ENCODE measurements at regions of chr2 and their contacts with region 1.

Region 1: DNA sequence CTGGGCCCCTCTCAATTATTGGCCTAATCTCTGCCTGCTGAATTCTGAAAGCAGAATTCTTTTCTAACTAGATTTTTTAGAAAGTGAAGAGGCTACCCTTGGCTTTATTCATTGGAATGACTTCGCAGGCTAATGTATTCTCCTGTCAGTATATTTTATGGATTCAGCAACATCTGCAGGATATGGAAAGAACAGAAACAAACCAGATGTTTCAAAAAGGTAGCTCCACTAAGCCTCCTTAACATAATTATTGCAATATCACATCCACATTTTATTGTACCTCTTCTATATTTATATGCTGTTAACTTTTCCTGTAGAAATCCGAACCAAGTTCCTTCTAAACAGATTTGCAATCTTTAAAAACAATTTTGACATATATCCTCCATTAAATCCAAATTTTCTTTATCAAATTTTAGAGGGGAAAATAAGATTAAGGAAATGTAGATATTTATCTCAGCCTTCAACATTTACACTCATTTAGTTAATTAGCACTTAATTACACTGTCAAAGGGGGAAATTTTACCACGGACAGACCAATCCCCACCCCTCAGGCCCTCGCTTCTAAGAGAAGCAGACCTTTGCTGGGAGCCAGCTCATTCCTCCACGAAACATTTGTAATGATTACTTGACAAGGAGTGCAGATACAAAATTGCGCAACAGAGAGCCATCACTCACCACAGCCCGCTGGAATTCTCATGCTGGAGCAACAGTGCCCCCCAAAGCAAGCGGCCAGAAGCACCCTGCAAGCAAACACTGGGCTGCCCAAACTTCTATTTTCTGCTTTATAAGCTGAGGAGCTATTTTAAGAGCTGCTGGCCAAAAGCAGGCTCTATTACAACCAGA is 253.4 kb downstream of the ETAA1 start:
- DNase-seq: peak; percentile 74 to 83
- ATAC-seq: peak; percentile 84 to 86
- H3K4me3 ChIP-seq: no peak overlapping the region
- H3K27ac ChIP-seq: peak overlapping the region; percentile 64 to 71 (median 66)
- H3K4me1 ChIP-seq: peaks cover 25 to 26% of the 10 kb centered on the region in 2 donors
- H3K27me3 ChIP-seq: no peaks in the 10 kb centered on the region
- CTCF ChIP-seq: peak; percentile 42 to 74 (median 53)
- POLR2A ChIP-seq: no peak

Region 2: DNA sequence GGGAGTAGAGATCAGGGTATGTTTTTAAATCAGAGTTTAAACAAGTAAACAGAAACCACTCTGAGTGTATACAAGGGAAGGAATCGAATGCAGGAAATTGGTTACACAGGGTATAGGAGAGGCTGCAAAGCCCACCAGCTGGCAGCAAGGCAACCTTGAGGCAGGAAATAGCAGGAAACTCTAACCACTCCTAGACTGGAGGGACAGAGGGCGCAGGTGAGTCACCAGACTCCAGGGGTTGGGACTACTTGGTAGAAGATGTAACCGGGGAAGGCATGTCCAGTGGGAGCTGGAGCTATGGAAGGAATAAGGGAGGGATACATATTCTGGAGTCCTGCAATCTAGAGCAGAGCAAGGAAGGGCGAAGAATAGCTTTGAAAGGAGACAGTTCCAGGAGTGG is 1063.3 kb before region 1 on chr2:
- in situ Hi-C with region 1: no loop called
- intact Hi-C with region 1: loop called (anchors 10 kb)
- DNase-seq: no peak
- ATAC-seq: no peak
- H3K4me3 ChIP-seq: no peak overlapping the region
- H3K27ac ChIP-seq: no peak overlapping the region
- H3K4me1 ChIP-seq: no peaks in the 10 kb centered on the region
- H3K27me3 ChIP-seq: peaks cover 34 to 43% (median 42%) of the 10 kb centered on the region in 3 donors
- CTCF ChIP-seq: no peak
- POLR2A ChIP-seq: no peak

Region 3: GRCh38 chr2:67397143-67397986 is 253.1 kb before region 1 on chr2 and contains the start of gene ETAA1:
- in situ Hi-C with region 1: no loop called
- intact Hi-C with region 1: loop called (anchors 1 kb)
- DNase-seq: peak; percentile 85 to 88
- ATAC-seq: peak; percentile 98
- H3K4me3 ChIP-seq: peak within 1 kb of the TSS; percentile 83 to 95 (median 89)
- H3K27ac ChIP-seq: peak within 1 kb of the TSS; percentile 82 to 90 (median 90)
- H3K4me1 ChIP-seq: no peaks in the 10 kb centered on the region
- H3K27me3 ChIP-seq: no peaks in the 10 kb centered on the region
- CTCF ChIP-seq: no peak
- POLR2A ChIP-seq: peak; percentile 61 to 65
- total RNA-seq, gene ETAA1: 4.1 to 7.8 (median 4.9) TPM

Region 4: DNA sequence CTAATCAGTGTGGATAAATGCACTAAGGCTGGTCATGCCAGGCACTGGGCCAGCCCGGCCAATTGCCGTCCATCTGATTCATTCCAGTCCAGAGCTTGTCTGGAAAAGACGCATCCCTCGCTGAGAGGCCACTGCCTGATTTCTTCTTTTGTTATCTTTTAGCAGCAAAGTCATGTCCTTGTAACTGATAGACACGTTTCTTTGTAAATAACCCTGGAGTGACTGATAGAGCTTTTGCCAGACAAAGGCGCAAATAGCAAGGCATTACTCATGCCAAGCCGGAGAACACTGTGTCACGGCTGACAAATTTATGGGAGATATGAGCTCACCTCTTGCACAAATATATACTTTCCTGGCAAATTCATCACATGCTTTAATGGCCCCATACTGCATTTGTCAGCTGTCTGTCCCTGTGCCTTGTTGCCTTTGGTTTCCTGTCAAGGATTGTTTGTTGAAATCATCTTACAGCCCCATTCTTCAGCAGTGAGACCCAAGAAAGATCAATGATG is 89.0 kb before region 1 on chr2:
- in situ Hi-C with region 1: no loop called
- intact Hi-C with region 1: loop called (anchors 5 kb)
- DNase-seq: no peak
- ATAC-seq: peak in 1 of 2 donors; percentile 78
- H3K4me3 ChIP-seq: no peak overlapping the region
- H3K27ac ChIP-seq: no peak overlapping the region
- H3K4me1 ChIP-seq: no peaks in the 10 kb centered on the region
- H3K27me3 ChIP-seq: no peaks in the 10 kb centered on the region
- CTCF ChIP-seq: no peak
- POLR2A ChIP-seq: no peak

Region 5: DNA sequence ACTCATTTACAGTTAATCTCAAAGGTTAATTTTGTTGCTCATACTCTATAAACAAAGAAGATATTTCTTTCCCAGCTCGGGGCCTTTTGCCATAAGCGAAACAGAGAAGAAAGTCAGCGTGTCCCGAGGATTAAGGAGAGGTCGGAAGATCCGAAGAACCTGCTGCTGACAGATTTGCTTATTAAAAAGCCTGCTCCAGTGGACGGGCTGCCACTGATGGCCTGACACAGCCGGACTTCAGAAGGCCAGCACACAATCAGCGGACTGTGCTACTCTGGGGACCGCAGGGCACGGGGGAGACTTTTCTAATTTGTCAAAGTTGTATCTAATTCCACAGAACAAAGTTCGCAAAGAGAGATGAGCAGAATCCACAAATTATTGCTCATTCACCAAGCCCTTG is 62.0 kb after region 1 on chr2:
- in situ Hi-C with region 1: no loop called
- intact Hi-C with region 1: no loop called
- DNase-seq: no peak
- ATAC-seq: no peak
- H3K4me3 ChIP-seq: no peak overlapping the region
- H3K27ac ChIP-seq: no peak overlapping the region
- H3K4me1 ChIP-seq: no peaks in the 10 kb centered on the region
- H3K27me3 ChIP-seq: no peaks in the 10 kb centered on the region
- CTCF ChIP-seq: no peak
- POLR2A ChIP-seq: no peak